MCF 10A (cell line): ENCODE measurements at regions of chr6 and their contacts with region 1.

Region 1: GRCh38 chr6:73515204-73515655 is 5.6 kb downstream of the EEF1A1 start:
- DNase-seq: peak; percentile 32
- H3K4me3 Mint-ChIP-seq: no peak overlapping the region
- H3K27ac Mint-ChIP-seq: peak overlapping the region; percentile 35
- H3K4me1 Mint-ChIP-seq: peaks cover 12% of the 10 kb centered on the region
- H3K27me3 Mint-ChIP-seq: no peaks in the 10 kb centered on the region
- CTCF ChIP-seq: no peak

Region 2: DNA sequence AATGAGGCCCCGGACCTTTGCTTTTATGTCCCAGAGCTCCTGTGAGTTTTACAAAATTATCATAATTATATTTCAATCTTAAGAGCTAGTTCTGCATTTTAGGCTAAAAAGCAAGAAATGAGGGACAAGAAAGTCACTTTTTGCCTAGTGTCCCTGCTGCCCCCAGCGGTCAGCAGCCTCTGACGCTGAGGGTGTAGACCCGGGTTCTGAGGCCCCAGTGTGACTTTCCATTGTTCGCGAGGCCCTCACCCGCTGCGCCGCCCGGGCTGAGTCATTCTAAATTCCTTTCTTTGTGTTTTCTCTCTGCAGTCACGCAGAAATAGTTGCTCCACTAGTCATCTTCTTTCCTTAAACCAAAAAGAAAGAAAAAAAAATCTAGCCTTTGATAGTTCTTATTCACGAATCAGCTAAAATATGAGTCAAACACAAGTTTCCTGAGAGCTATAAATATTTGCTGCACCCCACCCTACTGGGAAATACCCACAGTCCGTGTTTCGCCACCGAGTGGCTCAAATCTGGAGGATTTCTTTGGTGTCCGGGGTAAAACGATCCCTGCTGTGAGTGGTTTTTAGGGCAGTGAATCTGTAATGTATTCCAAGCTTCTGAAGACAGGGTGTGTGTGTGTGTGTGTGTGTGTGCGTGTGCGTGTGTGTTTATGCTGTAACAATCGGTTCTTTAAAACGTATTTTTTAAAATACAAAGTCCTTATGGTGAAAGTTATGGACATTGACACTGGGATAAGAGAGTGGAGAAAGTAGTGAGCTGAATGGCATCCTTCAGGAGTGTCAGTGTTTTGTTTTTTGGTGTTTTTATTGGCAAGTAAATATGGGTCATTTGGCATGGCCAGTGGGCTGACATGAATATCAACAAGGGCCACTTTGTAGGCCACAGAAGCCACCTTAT is 65.3 kb after region 1 on chr6:
- CTCF ChIA-PET with region 1: interaction called, 15 read pairs
- POLR2A ChIA-PET with region 1: interaction called, 244 read pairs
- intact Hi-C with region 1: no loop called
- DNase-seq: peak; percentile 94
- H3K4me3 Mint-ChIP-seq: peak overlapping the region; percentile 81
- H3K27ac Mint-ChIP-seq: peak overlapping the region; percentile 100
- H3K4me1 Mint-ChIP-seq: peaks cover 9% of the 10 kb centered on the region
- H3K27me3 Mint-ChIP-seq: no peaks in the 10 kb centered on the region
- CTCF ChIP-seq: peak; percentile 17

Region 3: DNA sequence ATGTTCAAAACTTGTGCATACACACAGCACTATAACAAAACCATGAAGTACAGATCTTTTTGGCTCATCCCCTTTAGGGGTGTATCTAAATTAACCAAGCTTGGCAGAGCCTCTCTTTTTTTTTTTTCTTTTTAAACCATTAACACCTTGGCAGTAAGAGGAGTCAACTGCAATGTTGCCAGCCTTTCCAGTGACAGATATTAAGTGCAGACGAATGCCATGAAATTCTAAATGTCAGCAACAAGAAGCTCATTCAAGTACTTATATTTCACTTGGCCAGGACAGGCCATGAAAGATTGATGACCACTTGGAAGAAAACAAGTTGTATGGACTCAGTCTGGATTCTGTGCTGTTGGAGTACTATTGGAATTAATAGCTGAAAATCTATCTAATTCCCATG is 88.8 kb after region 1 on chr6:
- CTCF ChIA-PET with region 1: interaction called, 108 read pairs
- POLR2A ChIA-PET with region 1: interaction called, 185 read pairs
- intact Hi-C with region 1: no loop called
- DNase-seq: no peak
- H3K4me3 Mint-ChIP-seq: no peak overlapping the region
- H3K27ac Mint-ChIP-seq: no peak overlapping the region
- H3K4me1 Mint-ChIP-seq: no peaks in the 10 kb centered on the region
- H3K27me3 Mint-ChIP-seq: no peaks in the 10 kb centered on the region
- CTCF ChIP-seq: no peak

Region 4: DNA sequence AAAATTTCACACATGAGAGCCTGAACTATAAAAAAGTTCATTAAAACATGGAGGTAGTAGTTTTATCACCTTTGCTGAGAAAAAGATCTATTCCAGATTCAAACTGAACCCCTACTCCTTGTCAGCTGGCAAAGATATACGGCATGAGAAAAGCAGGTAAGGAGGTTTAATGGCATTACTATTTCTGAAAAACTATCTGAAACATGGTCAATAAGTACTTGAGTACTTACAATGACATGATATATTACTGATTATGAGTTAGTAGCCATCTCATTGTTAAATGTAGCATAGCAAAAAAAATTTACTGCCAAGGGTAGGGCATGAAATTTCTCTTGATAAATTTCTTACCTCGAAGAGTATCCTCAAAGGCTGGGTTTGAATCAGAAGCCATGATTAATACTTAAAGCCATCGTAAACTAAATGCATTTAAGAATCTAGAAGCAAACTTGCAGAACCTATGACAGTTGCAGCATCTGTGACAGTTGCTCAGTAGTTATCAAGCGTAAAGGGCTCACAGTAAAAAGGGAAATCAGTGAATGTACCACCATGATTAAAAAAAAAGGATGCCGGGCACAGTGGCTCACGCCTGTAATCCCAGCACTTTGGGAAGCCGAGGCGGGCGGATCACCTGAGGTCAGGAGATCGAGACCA is 129.8 kb after region 1 on chr6:
- CTCF ChIA-PET with region 1: interaction called, 3 read pairs
- POLR2A ChIA-PET with region 1: interaction called, 65 read pairs
- intact Hi-C with region 1: no loop called
- DNase-seq: no peak
- H3K4me3 Mint-ChIP-seq: peak overlapping the region; percentile 79
- H3K27ac Mint-ChIP-seq: peak overlapping the region; percentile 90
- H3K4me1 Mint-ChIP-seq: peaks cover 34% of the 10 kb centered on the region
- H3K27me3 Mint-ChIP-seq: no peaks in the 10 kb centered on the region
- CTCF ChIP-seq: no peak